HCT116 (cell line): ENCODE measurements at regions of chr10 and their contacts with region 1.

Region 1: DNA sequence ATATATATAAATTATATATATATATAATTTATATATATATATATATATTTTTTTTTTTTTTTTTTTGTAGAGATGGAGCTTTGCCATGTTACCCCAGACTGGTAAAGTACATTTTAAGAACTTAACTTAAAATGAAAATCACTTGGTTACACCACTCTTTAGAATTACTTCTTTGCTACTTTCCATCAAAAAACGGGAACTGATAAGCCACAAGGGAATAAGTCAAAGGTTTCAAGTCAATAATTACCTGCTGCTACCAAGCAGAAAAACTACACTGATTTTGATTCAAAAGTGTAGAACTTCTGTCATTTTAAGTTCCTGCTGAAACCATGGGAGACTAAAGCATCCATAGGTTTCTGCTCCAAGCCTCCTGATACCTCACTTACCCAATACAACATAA is 12.2 kb downstream of the PPA1 start:
- DNase-seq: no peak
- ATAC-seq: no peak
- H3K4me3 ChIP-seq: no peak overlapping the region
- H3K27ac ChIP-seq: peak overlapping the region; percentile 67; the same call in 1 of the 2 replicates
- H3K4me1 ChIP-seq: peaks cover 24 to 36% of the 10 kb centered on the region in 2 experiments
- H3K27me3 ChIP-seq: no peaks in the 10 kb centered on the region
- CTCF ChIP-seq: no peak
- POLR2A ChIP-seq: no peak
- RAD21 ChIP-seq: no peak

Region 2: DNA sequence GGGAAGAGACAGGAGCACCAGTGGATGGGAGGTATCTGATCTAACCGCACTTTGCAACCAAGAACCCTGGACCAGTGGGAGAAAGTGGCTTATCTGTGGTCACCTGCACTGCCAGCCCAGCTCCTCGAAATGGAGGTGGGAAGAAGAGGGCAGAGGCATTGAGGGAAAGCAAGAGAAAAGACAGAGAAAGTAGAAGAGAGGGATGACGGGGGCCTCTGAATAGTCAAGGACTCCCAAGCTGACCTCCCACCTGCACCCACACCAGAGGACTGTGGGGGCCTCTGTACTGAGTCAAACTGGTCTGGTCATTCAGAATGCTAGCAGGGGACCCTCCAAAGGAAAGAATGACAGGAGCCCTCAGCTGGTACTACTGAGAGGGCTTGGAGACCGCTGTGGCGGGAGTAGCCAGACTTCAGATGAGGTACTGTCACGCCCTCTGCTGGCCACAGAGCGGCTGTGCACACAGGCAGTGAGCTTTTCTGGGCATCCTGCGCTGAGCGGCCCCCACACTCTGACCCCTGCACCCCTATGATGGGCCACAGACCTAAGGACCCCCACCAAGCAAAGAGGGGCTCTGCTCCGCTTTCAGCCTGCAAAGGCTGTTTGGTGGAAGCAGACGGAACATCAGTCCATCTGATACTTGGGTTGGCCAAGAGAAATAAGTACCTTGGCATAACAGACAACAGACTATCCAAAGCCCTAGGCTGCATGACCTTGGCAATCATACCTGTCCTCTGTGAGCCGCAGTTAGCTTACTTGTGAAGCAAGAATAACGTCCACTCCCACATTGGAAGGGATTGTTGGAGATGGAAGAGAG is 306.4 kb before region 1 on chr10:
- CTCF ChIA-PET with region 1: no interaction called
- POLR2A ChIA-PET with region 1: no interaction called
- RAD21 ChIA-PET with region 1: no interaction called
- intact Hi-C with region 1: no loop called
- DNase-seq: peak; percentile 35
- ATAC-seq: peak; percentile 96
- H3K4me3 ChIP-seq: no peak overlapping the region
- H3K27ac ChIP-seq: no peak overlapping the region
- H3K4me1 ChIP-seq: no peaks in the 10 kb centered on the region
- H3K27me3 ChIP-seq: no peaks in the 10 kb centered on the region
- CTCF ChIP-seq: peak; percentile 91 to 95 (median 91)
- POLR2A ChIP-seq: no peak
- RAD21 ChIP-seq: peak; percentile 94

Region 3: GRCh38 chr10:70146489-70147258 is 74.4 kb before region 1 on chr10 and contains the start of gene TYSND1:
- CTCF ChIA-PET with region 1: interaction called, 18 read pairs
- POLR2A ChIA-PET with region 1: no interaction called
- RAD21 ChIA-PET with region 1: no interaction called
- intact Hi-C with region 1: loop called (anchors 2 kb)
- DNase-seq: peak; percentile 98
- ATAC-seq: peak; percentile 89
- H3K4me3 ChIP-seq: peak within 1 kb of the TSS; percentile 74 to 81
- H3K27ac ChIP-seq: peak within 1 kb of the TSS; percentile 86
- H3K4me1 ChIP-seq: peaks cover 8 to 26% of the 10 kb centered on the region in 2 experiments; a peak in 3 of 4 replicates
- H3K27me3 ChIP-seq: no peaks in the 10 kb centered on the region
- CTCF ChIP-seq: peak; percentile 60 to 81 (median 61)
- POLR2A ChIP-seq: peak; percentile 95
- RAD21 ChIP-seq: peak; percentile 71
- total RNA-seq, gene TYSND1: 13.6 TPM

Region 4: DNA sequence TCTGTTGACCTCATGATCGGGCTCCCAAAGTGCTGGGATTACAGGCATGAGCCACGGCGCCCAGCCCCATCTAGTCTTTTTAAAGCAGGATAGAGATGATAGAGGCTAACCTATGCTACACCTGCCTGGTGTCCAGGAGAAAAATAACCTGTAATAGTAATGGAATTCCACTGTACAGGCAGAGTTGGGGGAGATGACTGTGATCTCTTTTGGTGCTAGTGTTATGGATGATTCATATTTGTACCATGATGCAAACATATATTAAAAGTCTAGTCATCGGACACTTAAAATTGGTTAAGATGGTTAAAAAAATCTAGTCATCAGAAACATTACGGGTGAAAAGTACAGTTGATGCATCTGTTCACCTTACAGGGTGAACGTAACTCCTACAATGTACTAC is 44.6 kb before region 1 on chr10:
- CTCF ChIA-PET with region 1: no interaction called
- POLR2A ChIA-PET with region 1: no interaction called
- RAD21 ChIA-PET with region 1: no interaction called
- intact Hi-C with region 1: no loop called
- DNase-seq: no peak
- ATAC-seq: no peak
- H3K4me3 ChIP-seq: no peak overlapping the region
- H3K27ac ChIP-seq: no peak overlapping the region
- H3K4me1 ChIP-seq: peaks cover 0 to 17% of the 10 kb centered on the region in 2 experiments; a peak in 2 of 4 replicates
- H3K27me3 ChIP-seq: no peaks in the 10 kb centered on the region; the same call in 1 of the 2 replicates
- CTCF ChIP-seq: no peak
- POLR2A ChIP-seq: no peak
- RAD21 ChIP-seq: no peak

Region 5: DNA sequence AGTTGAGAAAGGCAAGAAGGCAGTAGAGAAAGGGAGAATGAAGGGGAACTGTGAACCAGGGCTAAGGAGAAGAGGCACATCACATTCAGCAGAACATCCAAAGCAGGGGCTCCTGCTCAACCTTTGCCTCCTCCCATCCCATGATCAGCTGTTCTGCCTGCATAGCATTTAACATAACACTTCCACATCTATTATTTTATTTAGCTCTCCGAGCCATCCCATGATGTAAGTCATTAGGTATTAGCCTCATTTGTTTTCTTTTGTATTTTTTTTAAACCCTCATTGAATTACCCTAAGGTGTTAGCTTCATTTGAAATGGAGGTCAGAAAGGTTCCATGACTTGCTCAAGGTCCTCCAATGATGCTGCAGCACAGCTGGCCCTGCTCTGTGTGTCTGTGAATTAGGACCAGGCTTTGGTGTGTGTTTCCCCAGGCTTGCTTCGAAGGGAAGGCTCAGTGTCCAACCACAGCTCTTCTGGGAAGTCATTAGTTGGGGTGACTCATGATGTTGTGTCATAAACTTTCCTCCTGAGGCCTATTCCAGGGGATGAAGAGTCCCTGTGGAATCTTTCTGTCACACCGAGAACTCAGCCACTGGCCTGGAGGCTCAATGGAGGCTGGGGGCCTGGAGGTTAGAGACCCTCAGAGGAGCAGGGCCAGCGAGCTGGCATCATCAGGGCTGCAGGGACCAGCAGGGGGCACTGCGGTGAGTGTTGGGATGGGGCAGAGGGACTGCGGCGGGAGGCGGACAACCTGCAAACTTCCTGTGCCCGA is 46.3 kb after region 1 on chr10:
- CTCF ChIA-PET with region 1: interaction called, 26 read pairs
- POLR2A ChIA-PET with region 1: interaction called, 4 read pairs
- RAD21 ChIA-PET with region 1: interaction called, 4 to 5 read pairs
- intact Hi-C with region 1: no loop called
- DNase-seq: peak; percentile 73
- ATAC-seq: peak; percentile 80
- H3K4me3 ChIP-seq: no peak overlapping the region
- H3K27ac ChIP-seq: no peak overlapping the region
- H3K4me1 ChIP-seq: peaks cover 5 to 28% of the 10 kb centered on the region in 2 experiments; a peak in 3 of 4 replicates
- H3K27me3 ChIP-seq: no peaks in the 10 kb centered on the region
- CTCF ChIP-seq: peak in 2 of 3 experiments; percentile 44 to 60; a peak in 4 of 6 replicates
- POLR2A ChIP-seq: no peak
- RAD21 ChIP-seq: no peak; the same call in 1 of the 2 replicates

Region 6: GRCh38 chr10:70331486-70332268 is 110.6 kb after region 1 on chr10:
- CTCF ChIA-PET with region 1: interaction called, 6 read pairs
- POLR2A ChIA-PET with region 1: interaction called, 3 read pairs
- RAD21 ChIA-PET with region 1: interaction called in 1 of 2 experiments, 3 read pairs
- intact Hi-C with region 1: loop called (anchors 1 kb)
- DNase-seq: peak; percentile 96
- ATAC-seq: peak; percentile 87
- H3K4me3 ChIP-seq: peak overlapping the region in 1 of 2 experiments; percentile 35; a peak in 2 of 4 replicates
- H3K27ac ChIP-seq: peak overlapping the region; percentile 43
- H3K4me1 ChIP-seq: peaks cover 24 to 29% of the 10 kb centered on the region in 2 experiments
- H3K27me3 ChIP-seq: no peaks in the 10 kb centered on the region
- CTCF ChIP-seq: peak; percentile 49 to 62 (median 54); a peak in 5 of 6 replicates
- POLR2A ChIP-seq: no peak
- RAD21 ChIP-seq: peak; percentile 76

Region 7: GRCh38 chr10:70363971-70364771 is 143.1 kb after region 1 on chr10:
- CTCF ChIA-PET with region 1: interaction called, 174 read pairs
- POLR2A ChIA-PET with region 1: interaction called, 12 read pairs
- RAD21 ChIA-PET with region 1: interaction called, 22 to 30 read pairs
- intact Hi-C with region 1: loop called (anchors 1 kb)
- DNase-seq: peak; percentile 67
- ATAC-seq: peak; percentile 99
- H3K4me3 ChIP-seq: no peak overlapping the region
- H3K27ac ChIP-seq: no peak overlapping the region; the same call in 1 of the 2 replicates
- H3K4me1 ChIP-seq: peaks cover 2 to 10% of the 10 kb centered on the region in 2 experiments; a peak in 3 of 4 replicates
- H3K27me3 ChIP-seq: no peaks in the 10 kb centered on the region
- CTCF ChIP-seq: peak; percentile 85 to 94 (median 91)
- POLR2A ChIP-seq: no peak
- RAD21 ChIP-seq: peak; percentile 99

Region 8: GRCh38 chr10:70391654-70392053 is 170.6 kb after region 1 on chr10:
- CTCF ChIA-PET with region 1: interaction called, 82 read pairs
- POLR2A ChIA-PET with region 1: interaction called, 9 read pairs
- RAD21 ChIA-PET with region 1: interaction called, 5 to 7 read pairs
- intact Hi-C with region 1: loop called (anchors 1 kb)
- DNase-seq: no peak
- ATAC-seq: no peak
- H3K4me3 ChIP-seq: no peak overlapping the region
- H3K27ac ChIP-seq: no peak overlapping the region
- H3K4me1 ChIP-seq: peaks cover 4 to 15% of the 10 kb centered on the region in 2 experiments
- H3K27me3 ChIP-seq: no peaks in the 10 kb centered on the region
- CTCF ChIP-seq: no peak
- POLR2A ChIP-seq: no peak
- RAD21 ChIP-seq: no peak

Region 9: DNA sequence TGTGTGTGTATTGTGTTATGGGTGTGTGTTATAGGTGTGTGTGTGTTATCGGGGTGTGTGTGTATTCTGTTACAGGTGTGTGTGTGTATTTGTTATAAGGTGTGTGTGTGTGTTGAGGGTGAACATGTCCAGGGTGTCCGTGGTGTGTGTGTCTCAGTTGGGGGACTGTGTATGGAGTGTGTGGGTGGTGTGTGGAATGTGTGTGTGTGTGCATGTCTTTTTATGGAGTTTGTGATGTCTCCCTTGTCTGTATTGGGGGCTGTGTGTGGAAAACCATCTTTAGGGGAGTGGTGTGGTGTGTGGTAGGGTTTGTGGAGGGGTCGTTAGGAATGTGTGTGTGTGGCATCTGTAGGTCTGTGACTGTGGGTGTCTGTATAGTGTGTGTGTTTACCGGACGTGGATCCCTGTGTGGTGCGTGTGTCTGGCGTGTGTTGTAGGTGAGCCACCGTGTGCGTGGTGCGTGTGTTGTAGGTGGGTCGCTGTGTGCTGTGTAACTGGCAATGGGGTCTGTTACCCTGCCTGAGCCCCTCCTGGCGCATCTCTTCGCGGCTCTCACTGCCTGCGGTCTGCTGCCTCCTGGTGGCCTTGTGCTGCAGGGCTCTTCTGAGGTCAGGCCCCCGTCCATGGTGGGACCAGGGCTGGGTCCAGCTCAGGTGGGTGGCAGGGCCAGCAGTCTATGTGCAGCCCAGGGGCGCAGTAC is 319.2 kb after region 1 on chr10:
- CTCF ChIA-PET with region 1: no interaction called
- POLR2A ChIA-PET with region 1: no interaction called
- RAD21 ChIA-PET with region 1: no interaction called
- intact Hi-C with region 1: loop called (anchors 5 kb)
- DNase-seq: no peak
- ATAC-seq: peak; percentile 53
- H3K4me3 ChIP-seq: no peak overlapping the region
- H3K27ac ChIP-seq: no peak overlapping the region
- H3K4me1 ChIP-seq: peaks cover 3 to 11% of the 10 kb centered on the region in 2 experiments; a peak in 2 of 4 replicates
- H3K27me3 ChIP-seq: no peaks in the 10 kb centered on the region
- CTCF ChIP-seq: peak; percentile 48 to 78 (median 73); a peak in 5 of 6 replicates
- POLR2A ChIP-seq: no peak
- RAD21 ChIP-seq: peak; percentile 80